AG04449 (cell line): ENCODE measurements at regions of chr1 and their contacts with region 1.

Region 1: DNA sequence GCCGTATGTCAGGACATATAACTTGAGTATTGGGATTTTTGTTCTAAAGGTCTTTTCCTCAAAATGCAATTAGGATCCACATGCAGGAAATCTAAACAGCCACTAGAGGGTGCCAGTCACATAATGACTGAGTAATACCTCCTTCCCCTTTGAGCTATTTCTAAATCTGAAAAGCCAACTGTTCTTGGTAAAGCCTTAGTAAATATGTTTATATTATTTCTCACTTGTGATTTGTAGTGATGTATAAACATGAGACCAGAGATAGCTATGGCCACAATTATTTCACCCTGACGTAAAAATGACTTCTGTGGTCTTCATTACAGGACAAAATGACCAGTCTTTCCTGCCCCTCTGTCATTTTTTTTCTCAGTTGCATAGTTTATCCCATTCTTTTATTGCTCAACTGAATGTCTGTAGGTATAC is 41.0 kb upstream of the DR1 start:
- DNase-seq: peak; percentile 23
- H3K4me3 ChIP-seq: no peak overlapping the region
- CTCF ChIP-seq: peak; percentile 56

Region 2: GRCh38 chr1:93159337-93159736 is 145.4 kb before region 1 on chr1:
- CTCF ChIA-PET with region 1: no interaction called
- POLR2A ChIA-PET with region 1: no interaction called
- DNase-seq: no peak
- H3K4me3 ChIP-seq: no peak overlapping the region
- CTCF ChIP-seq: no peak

Region 3: GRCh38 chr1:93317207-93317606 is 12.5 kb after region 1 on chr1:
- CTCF ChIA-PET with region 1: interaction called, 83 read pairs
- POLR2A ChIA-PET with region 1: no interaction called
- DNase-seq: no peak
- H3K4me3 ChIP-seq: no peak overlapping the region
- CTCF ChIP-seq: no peak

Region 4: GRCh38 chr1:93345633-93346420 is 41.1 kb after region 1 on chr1 and contains the start of gene DR1:
- CTCF ChIA-PET with region 1: interaction called, 19 read pairs
- POLR2A ChIA-PET with region 1: interaction called, 3 read pairs
- DNase-seq: peak; percentile 77
- H3K4me3 ChIP-seq: peak within 1 kb of the TSS; percentile 85
- CTCF ChIP-seq: no peak

Region 5: DNA sequence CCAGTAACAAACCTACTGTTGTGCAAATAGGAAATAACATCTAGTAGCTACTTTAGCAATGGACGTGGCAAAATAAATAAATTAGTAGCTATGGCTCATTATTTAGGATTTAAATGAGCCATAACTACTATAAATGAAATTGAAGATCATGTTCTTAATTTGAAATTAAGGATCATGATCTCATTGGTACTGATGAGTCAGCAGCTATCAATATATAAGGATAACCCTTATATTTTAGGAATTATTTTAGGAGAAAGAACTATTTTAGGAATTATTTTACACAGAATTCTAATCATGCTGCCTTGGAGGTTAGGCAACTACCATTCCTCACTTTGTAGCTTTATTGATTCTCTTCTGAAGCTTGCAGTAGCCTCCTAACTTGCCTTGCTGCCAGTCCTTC is 65.0 kb after region 1 on chr1:
- CTCF ChIA-PET with region 1: interaction called, 20 read pairs
- POLR2A ChIA-PET with region 1: no interaction called
- DNase-seq: no peak
- H3K4me3 ChIP-seq: no peak overlapping the region
- CTCF ChIP-seq: no peak

Region 6: DNA sequence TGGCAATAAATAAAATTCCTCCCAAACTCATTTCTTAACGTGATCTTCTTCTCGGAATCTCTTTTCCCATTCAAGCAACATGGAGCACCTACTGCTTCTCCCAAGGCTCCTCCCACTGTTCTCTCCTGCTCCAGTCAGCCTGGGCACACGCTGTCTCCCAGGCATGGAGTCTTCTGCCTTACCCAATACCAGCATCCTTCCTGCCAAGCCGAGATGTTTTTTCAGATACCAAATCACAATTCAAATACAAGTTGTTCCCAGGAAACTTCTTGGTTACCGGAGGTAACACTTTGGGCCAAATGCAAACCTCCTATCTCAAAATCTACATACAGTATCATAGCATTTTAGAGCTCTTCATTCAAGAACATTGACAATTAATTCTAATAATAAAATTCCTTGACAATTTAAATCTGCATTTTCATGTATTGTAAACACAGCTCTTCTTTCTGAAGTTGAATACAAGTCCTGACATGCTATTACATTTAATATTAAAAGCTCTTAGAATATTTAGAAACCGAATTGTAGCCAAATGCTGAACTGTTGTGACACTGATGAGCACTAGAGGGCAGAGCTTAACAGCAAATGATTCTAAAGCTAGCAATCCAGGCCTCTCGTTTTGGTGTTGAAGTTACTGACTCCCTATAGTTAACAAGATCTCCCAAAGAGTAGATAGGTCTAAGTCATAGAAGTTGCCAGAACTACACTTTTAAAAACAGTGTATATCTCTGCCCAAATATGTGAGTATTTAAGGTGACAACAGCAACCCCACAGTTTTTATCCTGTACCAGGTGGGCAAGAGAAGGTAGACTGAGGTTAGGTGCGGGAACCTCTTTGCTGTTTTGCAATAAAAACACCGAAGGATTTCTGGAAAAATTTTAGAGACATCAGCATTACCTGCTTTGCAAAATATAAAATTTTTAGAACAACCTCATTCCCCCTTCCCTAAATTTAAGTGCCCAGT is 324.7 kb after region 1 on chr1:
- CTCF ChIA-PET with region 1: interaction called, 13 read pairs
- POLR2A ChIA-PET with region 1: no interaction called
- DNase-seq: no peak
- H3K4me3 ChIP-seq: no peak overlapping the region
- CTCF ChIP-seq: peak; percentile 70